Natural killer cell (primary cell): ENCODE measurements at regions of chr20 and their contacts with region 1.

Region 1: DNA sequence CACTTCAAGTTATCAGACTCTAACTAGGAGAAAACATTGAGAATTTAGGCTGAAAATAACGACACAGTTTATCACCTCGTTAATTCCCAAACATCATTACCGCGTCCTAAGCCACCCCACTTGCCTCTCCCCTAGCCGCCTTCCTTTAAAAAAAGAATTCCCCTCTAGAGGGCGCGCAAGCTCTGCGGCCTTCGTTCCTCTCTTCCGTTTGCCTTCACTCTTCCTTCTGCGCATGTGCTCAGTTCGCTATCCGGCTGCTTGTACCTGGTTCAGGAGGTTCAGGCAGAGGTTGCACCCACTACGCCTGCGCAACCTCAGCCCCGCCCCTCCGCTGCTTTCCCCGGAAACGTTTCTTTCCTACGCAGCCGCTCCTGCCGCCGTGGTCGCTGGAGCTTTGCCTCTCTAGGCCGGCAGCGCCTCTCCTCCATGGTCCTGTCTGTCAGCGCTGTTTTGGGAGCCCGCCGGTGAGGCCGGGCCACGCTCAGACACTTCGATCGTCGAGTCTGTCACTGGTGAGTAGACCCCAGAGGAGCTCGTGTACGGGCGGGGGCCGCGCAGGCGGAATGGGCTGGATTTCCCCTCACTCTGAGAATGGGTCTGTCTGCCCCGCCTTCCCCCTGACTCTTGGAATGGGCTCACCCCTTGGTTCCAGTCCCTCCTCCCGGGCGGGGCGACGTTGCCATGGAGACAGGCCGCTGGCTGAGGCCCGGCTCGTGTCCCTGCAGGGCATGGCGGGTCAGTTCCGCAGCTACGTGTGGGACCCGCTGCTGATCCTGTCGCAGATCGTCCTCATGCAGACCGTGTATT is at the start of gene SYS1:
- DNase-seq: peak; percentile 95 to 100
- ATAC-seq: peak; percentile 87 to 97 (median 88)
- H3K4me3 ChIP-seq: peak within 1 kb of the TSS; percentile 78
- H3K4me3 Mint-ChIP-seq: peak within 1 kb of the TSS; percentile 99
- H3K27ac ChIP-seq: peak within 1 kb of the TSS; percentile 91
- H3K27ac Mint-ChIP-seq: peak within 1 kb of the TSS; percentile 97 to 99
- H3K4me1 ChIP-seq: peaks cover 29% of the 10 kb centered on the region
- H3K4me1 Mint-ChIP-seq: peaks cover 41 to 48% of the 10 kb centered on the region in 2 donors
- H3K27me3 ChIP-seq: no peaks in the 10 kb centered on the region
- H3K27me3 Mint-ChIP-seq: no peaks in the 10 kb centered on the region
- CTCF ChIP-seq: peak; percentile 92
- total RNA-seq, gene SYS1: 73.8 to 77.4 (median 74.0) TPM

Region 2: GRCh38 chr20:44552950-44553908 is 809.8 kb before region 1 on chr20:
- intact Hi-C with region 1: no loop called
- DNase-seq: peak in 1 of 2 donors; percentile 10
- ATAC-seq: no peak
- H3K4me3 ChIP-seq: no peak overlapping the region
- H3K4me3 Mint-ChIP-seq: no peak overlapping the region
- H3K27ac ChIP-seq: no peak overlapping the region
- H3K27ac Mint-ChIP-seq: no peak overlapping the region
- H3K4me1 ChIP-seq: no peaks in the 10 kb centered on the region
- H3K4me1 Mint-ChIP-seq: no peaks in the 10 kb centered on the region
- H3K27me3 ChIP-seq: no peaks in the 10 kb centered on the region
- H3K27me3 Mint-ChIP-seq: peaks cover under 1 to 2% of the 10 kb centered on the region in 2 donors
- CTCF ChIP-seq: no peak

Region 3: GRCh38 chr20:45136911-45137310 is 226.1 kb before region 1 on chr20:
- intact Hi-C with region 1: no loop called
- DNase-seq: no peak
- ATAC-seq: no peak
- H3K4me3 ChIP-seq: no peak overlapping the region
- H3K4me3 Mint-ChIP-seq: no peak overlapping the region
- H3K27ac ChIP-seq: no peak overlapping the region
- H3K27ac Mint-ChIP-seq: no peak overlapping the region
- H3K4me1 ChIP-seq: no peaks in the 10 kb centered on the region
- H3K4me1 Mint-ChIP-seq: no peaks in the 10 kb centered on the region
- H3K27me3 ChIP-seq: peaks cover 2% of the 10 kb centered on the region
- H3K27me3 Mint-ChIP-seq: peaks cover 12 to 43% of the 10 kb centered on the region in 2 donors
- CTCF ChIP-seq: no peak

Region 4: GRCh38 chr20:45293041-45294002 is 69.7 kb before region 1 on chr20:
- intact Hi-C with region 1: loop called (anchors 10 kb)
- DNase-seq: peak; percentile 75 to 83
- ATAC-seq: peak; percentile 91 to 93 (median 93)
- H3K4me3 ChIP-seq: peak overlapping the region; percentile 23
- H3K4me3 Mint-ChIP-seq: peak overlapping the region; percentile 80
- H3K27ac ChIP-seq: no peak overlapping the region
- H3K27ac Mint-ChIP-seq: no peak overlapping the region
- H3K4me1 ChIP-seq: peaks cover 11% of the 10 kb centered on the region
- H3K4me1 Mint-ChIP-seq: peaks cover 15 to 25% of the 10 kb centered on the region in 2 donors
- H3K27me3 ChIP-seq: peaks cover 10% of the 10 kb centered on the region
- H3K27me3 Mint-ChIP-seq: peaks cover 25 to 41% of the 10 kb centered on the region in 2 donors
- CTCF ChIP-seq: peak; percentile 83

Region 5: GRCh38 chr20:45318948-45319347 is 44.1 kb before region 1 on chr20:
- intact Hi-C with region 1: loop called (anchors 1 kb)
- DNase-seq: no peak
- ATAC-seq: no peak
- H3K4me3 ChIP-seq: no peak overlapping the region
- H3K4me3 Mint-ChIP-seq: no peak overlapping the region
- H3K27ac ChIP-seq: no peak overlapping the region
- H3K27ac Mint-ChIP-seq: no peak overlapping the region
- H3K4me1 ChIP-seq: peaks cover 23% of the 10 kb centered on the region
- H3K4me1 Mint-ChIP-seq: peaks cover 0 to 6% of the 10 kb centered on the region in 2 donors
- H3K27me3 ChIP-seq: no peaks in the 10 kb centered on the region
- H3K27me3 Mint-ChIP-seq: peaks cover 29 to 33% of the 10 kb centered on the region in 2 donors
- CTCF ChIP-seq: no peak

Region 6: DNA sequence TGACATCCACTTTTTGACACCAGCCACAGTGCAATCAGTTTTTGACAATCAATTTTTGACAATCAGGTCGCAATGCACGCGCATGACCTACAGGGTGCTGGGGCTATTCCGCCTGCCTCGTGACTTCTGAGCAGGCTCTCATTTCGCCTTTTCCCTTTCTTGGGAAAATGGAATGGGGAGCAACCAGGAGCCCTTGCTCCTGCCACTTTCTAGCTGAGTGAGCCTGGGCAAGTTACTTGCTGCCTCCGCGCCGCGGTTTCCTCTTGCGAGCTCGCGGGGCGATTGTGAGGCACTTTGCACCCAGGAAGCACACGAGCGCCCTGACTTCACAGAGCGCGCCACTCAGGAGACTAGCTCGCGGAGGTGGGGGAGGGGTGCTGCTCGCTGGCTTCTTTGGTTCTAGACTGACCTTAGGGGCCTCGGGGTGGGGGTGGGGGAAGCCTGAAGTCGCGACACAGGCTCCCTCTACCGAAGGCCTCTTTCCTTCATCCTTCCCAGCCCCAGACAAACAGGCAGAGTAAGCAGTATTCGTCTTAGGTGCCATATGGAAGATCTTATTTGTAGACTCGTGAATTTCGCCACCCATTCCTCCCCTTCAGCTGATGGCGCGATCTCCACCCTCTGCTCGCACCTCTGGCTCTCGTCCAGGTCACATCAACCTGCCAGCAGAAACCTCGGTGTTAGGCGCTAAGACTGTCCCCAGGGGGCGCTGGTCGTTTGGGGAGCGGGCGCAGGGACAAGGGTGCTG is 10.5 kb after region 1 on chr20:
- intact Hi-C with region 1: loop called (anchors 1 kb)
- DNase-seq: peak; percentile 80 to 95
- ATAC-seq: peak; percentile 84 to 88 (median 84)
- H3K4me3 ChIP-seq: peak overlapping the region; percentile 51
- H3K4me3 Mint-ChIP-seq: peak overlapping the region; percentile 85
- H3K27ac ChIP-seq: peak overlapping the region; percentile 81
- H3K27ac Mint-ChIP-seq: peak overlapping the region; percentile 84 to 93
- H3K4me1 ChIP-seq: peaks cover 26% of the 10 kb centered on the region
- H3K4me1 Mint-ChIP-seq: peaks cover 15 to 25% of the 10 kb centered on the region in 2 donors
- H3K27me3 ChIP-seq: no peaks in the 10 kb centered on the region
- H3K27me3 Mint-ChIP-seq: no peaks in the 10 kb centered on the region
- CTCF ChIP-seq: peak; percentile 85

Region 7: GRCh38 chr20:45415774-45416637 is 53.0 kb after region 1 on chr20 and contains the start of gene PIGT:
- intact Hi-C with region 1: loop called (anchors 1 kb)
- DNase-seq: peak; percentile 86 to 97
- ATAC-seq: peak; percentile 94 to 98 (median 95)
- H3K4me3 ChIP-seq: peak within 1 kb of the TSS; percentile 78
- H3K4me3 Mint-ChIP-seq: peak within 1 kb of the TSS; percentile 93
- H3K27ac ChIP-seq: peak within 1 kb of the TSS; percentile 88
- H3K27ac Mint-ChIP-seq: peak within 1 kb of the TSS; percentile 93 to 95
- H3K4me1 ChIP-seq: peaks cover 22% of the 10 kb centered on the region
- H3K4me1 Mint-ChIP-seq: peaks cover 36 to 43% of the 10 kb centered on the region in 2 donors
- H3K27me3 ChIP-seq: no peaks in the 10 kb centered on the region
- H3K27me3 Mint-ChIP-seq: no peaks in the 10 kb centered on the region
- CTCF ChIP-seq: no peak
- total RNA-seq, gene PIGT: 173 to 190 (median 187) TPM

Region 8: DNA sequence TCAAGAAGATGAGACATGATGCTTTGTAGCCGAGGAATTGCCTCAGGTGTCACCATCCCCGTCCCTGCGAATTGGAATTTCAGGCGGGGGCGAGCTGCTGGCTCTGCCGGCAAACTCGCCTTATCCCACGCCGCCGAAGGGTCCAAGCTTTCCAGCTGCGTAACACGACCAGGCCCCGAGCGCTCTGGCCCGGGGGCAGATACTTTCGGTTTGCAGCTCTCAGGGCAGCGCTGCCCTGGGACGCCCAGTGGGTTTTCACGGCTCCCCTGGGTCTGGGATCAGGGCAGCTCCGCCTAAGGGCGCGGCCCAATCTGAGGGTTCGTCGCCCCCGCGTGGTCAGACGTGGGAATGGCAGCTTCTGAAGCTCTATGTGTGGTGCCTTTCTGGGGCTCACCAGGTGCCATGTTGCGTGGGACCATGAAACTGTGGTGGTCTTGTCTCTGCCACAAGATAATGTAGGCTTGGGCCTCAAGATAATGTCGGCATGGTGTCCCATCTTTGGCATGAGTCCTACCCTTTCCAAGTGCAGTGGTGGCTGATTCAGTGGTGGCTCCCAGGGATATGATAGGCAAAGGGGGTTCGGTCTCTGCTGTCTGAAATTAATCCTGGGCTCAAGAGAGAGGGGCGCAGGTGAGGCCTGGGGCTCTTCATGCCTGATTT is 73.9 kb after region 1 on chr20:
- intact Hi-C with region 1: loop called (anchors 1 kb)
- DNase-seq: peak; percentile 86 to 93
- ATAC-seq: peak; percentile 91 to 93 (median 93)
- H3K4me3 ChIP-seq: peak overlapping the region; percentile 65
- H3K4me3 Mint-ChIP-seq: peak overlapping the region; percentile 73
- H3K27ac ChIP-seq: peak overlapping the region; percentile 68
- H3K27ac Mint-ChIP-seq: peak overlapping the region in 1 of 2 donors; percentile 74
- H3K4me1 ChIP-seq: peaks cover 25% of the 10 kb centered on the region
- H3K4me1 Mint-ChIP-seq: peaks cover 10 to 25% of the 10 kb centered on the region in 2 donors
- H3K27me3 ChIP-seq: no peaks in the 10 kb centered on the region
- H3K27me3 Mint-ChIP-seq: no peaks in the 10 kb centered on the region
- CTCF ChIP-seq: peak; percentile 95

Region 9: DNA sequence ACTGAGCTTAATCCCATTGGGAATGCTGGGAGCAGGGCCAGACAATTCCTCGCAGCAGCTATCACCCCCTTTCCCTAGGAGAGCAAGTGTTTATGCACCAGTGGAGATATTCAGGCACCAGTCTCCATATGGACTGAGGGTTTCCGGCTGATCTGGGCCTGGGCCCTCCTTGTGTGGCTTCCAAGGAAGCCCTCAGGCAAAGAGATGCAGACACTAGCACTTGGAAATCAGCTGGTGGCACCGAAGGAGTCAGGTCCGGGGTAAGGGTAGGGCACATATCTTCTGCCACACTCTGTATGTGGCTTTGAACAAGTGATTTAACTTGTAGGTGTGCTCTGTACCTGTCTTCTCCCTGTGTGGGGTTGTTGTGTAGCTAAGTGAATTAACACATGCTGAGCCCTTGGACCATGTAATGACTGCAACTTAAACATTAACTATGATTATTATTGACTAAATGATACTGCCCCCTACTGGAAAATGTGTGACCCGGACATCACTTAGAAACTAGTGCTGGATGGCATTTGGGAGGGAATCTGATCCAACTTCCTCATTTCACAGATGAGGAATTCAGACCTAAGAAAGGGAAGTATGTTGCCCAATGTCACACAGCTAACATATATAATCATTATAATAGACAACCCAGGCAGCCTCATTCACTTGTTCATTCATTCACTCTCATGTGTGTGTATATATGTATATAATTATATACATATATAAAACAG is 87.3 kb after region 1 on chr20:
- intact Hi-C with region 1: loop called (anchors 1 kb)
- DNase-seq: peak in 1 of 2 donors; percentile 71
- ATAC-seq: peak; percentile 53 to 66 (median 60)
- H3K4me3 ChIP-seq: no peak overlapping the region
- H3K4me3 Mint-ChIP-seq: no peak overlapping the region
- H3K27ac ChIP-seq: no peak overlapping the region
- H3K27ac Mint-ChIP-seq: no peak overlapping the region
- H3K4me1 ChIP-seq: peaks cover 4% of the 10 kb centered on the region
- H3K4me1 Mint-ChIP-seq: no peaks in the 10 kb centered on the region
- H3K27me3 ChIP-seq: no peaks in the 10 kb centered on the region
- H3K27me3 Mint-ChIP-seq: peaks cover 2 to 13% of the 10 kb centered on the region in 2 donors
- CTCF ChIP-seq: peak; percentile 77